ENCODE measurements at regions of chr2 and their contacts with region 1.

Region 1: DNA sequence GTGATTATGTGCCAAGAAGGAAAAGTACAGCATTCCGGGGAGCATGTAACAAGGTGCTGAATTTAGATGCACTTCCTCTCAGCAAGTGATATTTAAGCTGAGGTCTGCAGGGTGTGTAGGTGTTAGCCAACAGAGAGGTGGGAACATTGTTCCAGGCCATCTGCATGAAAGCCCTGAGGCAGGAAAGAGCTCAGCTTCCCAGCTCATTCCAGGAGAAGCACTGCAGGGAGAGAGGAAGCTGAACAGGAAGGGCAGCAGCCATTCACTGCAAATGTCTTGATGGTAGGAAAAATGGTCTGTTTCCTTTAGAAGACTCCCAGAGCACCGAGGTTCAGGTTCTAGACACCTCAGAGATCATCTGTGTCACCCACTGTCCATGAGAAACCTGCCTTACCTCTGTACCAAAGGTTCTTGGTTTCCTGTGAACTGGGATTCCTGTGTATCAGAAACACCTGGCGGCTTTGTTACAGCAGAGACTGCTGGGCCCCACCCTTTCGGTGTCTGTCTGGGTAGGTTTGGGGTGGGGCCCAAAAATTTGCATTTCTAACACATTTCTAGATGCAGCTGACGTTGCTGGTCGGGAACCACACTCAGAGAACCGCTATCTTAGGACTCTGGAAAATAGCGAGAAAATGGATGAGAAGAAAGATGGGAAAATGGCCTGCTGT is 84.0 kb downstream of the RTN4 start:
- DNase-seq: peak; percentile 76
- H3K4me3 Mint-ChIP-seq: peak overlapping the region; percentile 12
- H3K27ac Mint-ChIP-seq: peak overlapping the region; percentile 68
- H3K4me1 Mint-ChIP-seq: peaks cover 45% of the 10 kb centered on the region
- H3K27me3 Mint-ChIP-seq: no peaks in the 10 kb centered on the region
- CTCF ChIP-seq: no peak

Region 2: GRCh38 chr2:54052825-54053718 is 913.2 kb before region 1 on chr2:
- CTCF ChIA-PET with region 1: no interaction called
- POLR2A ChIA-PET with region 1: no interaction called
- intact Hi-C with region 1: no loop called
- DNase-seq: peak; percentile 41
- H3K4me3 Mint-ChIP-seq: no peak overlapping the region
- H3K27ac Mint-ChIP-seq: no peak overlapping the region
- H3K4me1 Mint-ChIP-seq: peaks cover 6% of the 10 kb centered on the region
- H3K27me3 Mint-ChIP-seq: no peaks in the 10 kb centered on the region
- CTCF ChIP-seq: no peak

Region 3: DNA sequence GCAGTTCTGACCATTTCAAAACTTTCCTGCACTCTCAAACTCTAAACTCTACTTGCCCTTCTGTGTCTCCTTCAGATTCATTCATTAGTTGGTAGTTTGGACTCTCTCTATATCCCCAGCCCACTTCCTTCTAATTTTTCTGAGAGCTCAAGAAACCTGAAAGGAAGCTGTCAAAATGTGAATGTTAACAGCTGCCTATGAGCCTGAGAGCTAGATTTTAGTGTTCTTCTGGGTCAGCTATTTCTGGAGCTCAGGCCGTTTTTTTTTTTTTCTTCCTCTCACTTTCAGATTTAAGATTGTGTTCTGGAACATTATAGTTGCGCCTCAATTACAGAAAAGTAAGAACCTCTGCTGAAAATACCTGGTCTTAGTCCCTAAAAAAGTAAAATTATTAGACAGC is 10.8 kb after region 1 on chr2:
- CTCF ChIA-PET with region 1: interaction called, 6 read pairs
- POLR2A ChIA-PET with region 1: interaction called, 23 read pairs
- intact Hi-C with region 1: no loop called
- DNase-seq: no peak
- H3K4me3 Mint-ChIP-seq: no peak overlapping the region
- H3K27ac Mint-ChIP-seq: no peak overlapping the region
- H3K4me1 Mint-ChIP-seq: peaks cover 21% of the 10 kb centered on the region
- H3K27me3 Mint-ChIP-seq: no peaks in the 10 kb centered on the region
- CTCF ChIP-seq: no peak

Region 4: DNA sequence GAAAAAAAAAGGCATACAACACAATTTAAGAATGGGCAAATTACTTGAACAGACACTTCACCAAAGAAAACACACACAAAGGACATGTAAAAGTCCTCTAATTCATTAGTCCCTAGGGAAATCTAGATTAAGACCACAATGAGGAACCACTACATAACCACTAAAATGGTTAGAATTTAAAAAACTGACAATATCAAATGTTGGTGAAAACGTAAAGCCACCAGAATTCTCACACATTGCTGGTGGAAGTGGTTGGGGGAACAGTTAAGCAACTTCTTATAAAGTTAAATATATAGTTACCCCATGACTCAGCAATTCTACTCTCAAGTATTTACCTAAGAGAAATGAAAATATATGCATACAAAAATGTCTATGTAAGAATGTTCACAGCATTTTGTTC is 72.1 kb after region 1 on chr2:
- CTCF ChIA-PET with region 1: no interaction called
- POLR2A ChIA-PET with region 1: no interaction called
- intact Hi-C with region 1: no loop called
- DNase-seq: no peak
- H3K4me3 Mint-ChIP-seq: no peak overlapping the region
- H3K27ac Mint-ChIP-seq: no peak overlapping the region
- H3K4me1 Mint-ChIP-seq: peaks cover 33% of the 10 kb centered on the region
- H3K27me3 Mint-ChIP-seq: no peaks in the 10 kb centered on the region
- CTCF ChIP-seq: no peak

Measured in MCF 10A (cell line).